HEK293T (cell line): ENCODE measurements at regions of chr5 and their contacts with region 1.

Region 1: GRCh38 chr5:57681942-57682341 is 199.3 kb upstream of the ACTBL2 start:
- DNase-seq: no peak

Region 2: DNA sequence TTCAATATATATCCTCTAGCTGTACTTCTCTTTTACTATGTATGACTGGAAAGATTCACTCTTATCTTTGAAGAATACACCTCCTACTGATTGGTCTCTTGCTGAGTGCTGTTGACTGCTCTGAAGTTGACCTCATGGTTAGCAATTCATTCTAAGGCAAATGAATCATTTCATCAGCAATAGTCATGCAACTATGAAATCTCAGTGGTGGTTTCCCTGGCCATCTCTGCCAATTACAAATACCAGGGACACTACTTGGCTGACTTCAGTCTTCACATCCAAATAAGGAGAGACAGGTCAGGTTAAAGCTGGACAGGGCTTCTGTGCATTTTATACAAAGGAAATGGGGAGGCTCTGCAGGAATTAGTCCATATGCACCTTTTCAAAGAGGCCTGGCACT is 134.2 kb after region 1 on chr5:
- CTCF ChIA-PET with region 1: interaction called, 11 read pairs
- POLR2A ChIA-PET with region 1: no interaction called
- DNase-seq: no peak